H1 (cell line): ENCODE measurements at regions of chr16 and their contacts with region 1.

Region 1: DNA sequence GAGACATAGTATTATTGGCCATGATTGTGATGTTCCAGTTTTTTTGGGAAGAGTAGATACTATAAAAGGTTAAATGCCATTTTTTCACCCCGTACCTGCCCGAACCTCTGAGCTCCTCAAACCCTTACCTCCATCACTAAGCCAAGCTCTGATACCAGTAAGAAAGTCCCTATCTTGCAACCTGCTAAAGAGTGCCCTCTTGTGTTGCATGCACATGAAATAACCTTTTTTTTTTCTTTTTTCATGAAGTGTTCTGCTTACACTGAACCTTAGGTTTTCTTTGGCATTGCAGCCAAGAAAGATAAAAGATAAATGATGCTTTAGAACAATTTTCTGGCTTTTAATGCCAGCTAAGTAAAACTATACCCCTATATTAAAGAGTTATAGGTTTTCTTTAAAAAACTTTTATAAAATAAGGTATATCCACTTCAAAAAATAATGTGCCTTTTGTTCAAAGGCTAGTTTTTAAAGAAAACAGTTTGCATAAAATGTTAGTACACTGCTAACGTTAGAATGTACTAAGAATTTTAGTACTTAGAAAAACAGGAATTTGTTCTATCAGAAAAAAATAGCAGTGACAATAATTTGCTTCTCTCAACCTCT is 295.3 kb upstream of the PMFBP1 start:
- DNase-seq: no peak
- H3K4me3 ChIP-seq: no peak overlapping the region
- H3K27ac ChIP-seq: no peak overlapping the region
- H3K4me1 ChIP-seq: no peaks in the 10 kb centered on the region
- H3K27me3 ChIP-seq: no peaks in the 10 kb centered on the region
- CTCF ChIP-seq: peak in 2 of 3 experiments; percentile 74; a peak in 3 of 4 replicates
- EP300 ChIP-seq: no peak
- POLR2A ChIP-seq: no peak
- RAD21 ChIP-seq: peak; percentile 85

Region 2: GRCh38 chr16:72124761-72125634 is 342.3 kb before region 1 on chr16:
- CTCF ChIA-PET with region 1: interaction called, 11 read pairs
- POLR2A ChIA-PET with region 1: no interaction called
- DNase-seq: peak; percentile 53 to 84
- H3K4me3 ChIP-seq: no peak overlapping the region
- H3K27ac ChIP-seq: no peak overlapping the region
- H3K4me1 ChIP-seq: peaks cover 0 to 4% (median 0%) of the 10 kb centered on the region in 4 experiments; a peak in 3 of 7 replicates
- H3K27me3 ChIP-seq: no peaks in the 10 kb centered on the region
- CTCF ChIP-seq: peak; percentile 79 to 91 (median 82)
- EP300 ChIP-seq: no peak
- POLR2A ChIP-seq: no peak
- RAD21 ChIP-seq: peak; percentile 92

Region 3: GRCh38 chr16:72195609-72196008 is 271.6 kb before region 1 on chr16:
- CTCF ChIA-PET with region 1: interaction called, 11 read pairs
- POLR2A ChIA-PET with region 1: no interaction called
- DNase-seq: peak; percentile 7 to 59
- H3K4me3 ChIP-seq: no peak overlapping the region
- H3K27ac ChIP-seq: no peak overlapping the region
- H3K4me1 ChIP-seq: peaks cover 2 to 4% (median 2%) of the 10 kb centered on the region in 4 experiments; a peak in 4 of 7 replicates
- H3K27me3 ChIP-seq: no peaks in the 10 kb centered on the region
- CTCF ChIP-seq: peak; percentile 80
- EP300 ChIP-seq: no peak
- POLR2A ChIP-seq: no peak
- RAD21 ChIP-seq: peak; percentile 93 to 96

Region 4: DNA sequence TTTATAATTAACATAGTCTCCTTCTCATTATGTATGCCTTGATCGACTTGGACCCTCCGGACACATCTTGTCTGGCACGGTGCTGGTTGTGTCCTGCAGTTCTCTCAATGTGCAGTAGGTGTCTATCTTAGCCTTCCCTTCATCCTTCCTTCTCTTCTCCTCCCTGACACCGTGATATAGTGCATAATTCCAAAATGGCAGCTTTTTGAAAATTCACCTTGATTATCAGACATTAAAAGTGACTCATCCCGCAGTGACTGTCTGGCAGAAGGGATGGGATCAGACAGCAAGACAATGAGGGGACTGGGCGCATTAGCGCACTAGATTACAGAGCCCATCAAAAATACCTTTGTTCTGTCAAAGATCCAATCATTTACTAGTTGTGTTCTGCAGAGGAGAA is 225.3 kb before region 1 on chr16:
- CTCF ChIA-PET with region 1: interaction called, 18 read pairs
- POLR2A ChIA-PET with region 1: no interaction called
- DNase-seq: no peak
- H3K4me3 ChIP-seq: no peak overlapping the region
- H3K27ac ChIP-seq: no peak overlapping the region
- H3K4me1 ChIP-seq: no peaks in the 10 kb centered on the region
- H3K27me3 ChIP-seq: no peaks in the 10 kb centered on the region
- CTCF ChIP-seq: peak; percentile 69 to 84 (median 71)
- EP300 ChIP-seq: no peak
- POLR2A ChIP-seq: no peak
- RAD21 ChIP-seq: peak; percentile 90 to 91

Region 5: GRCh38 chr16:72400257-72400882 is 66.9 kb before region 1 on chr16:
- CTCF ChIA-PET with region 1: interaction called, 12 read pairs
- POLR2A ChIA-PET with region 1: no interaction called
- DNase-seq: peak in 1 of 2 experiments; percentile 74
- H3K4me3 ChIP-seq: no peak overlapping the region
- H3K27ac ChIP-seq: no peak overlapping the region
- H3K4me1 ChIP-seq: peaks cover 0 to 2% (median 0%) of the 10 kb centered on the region in 4 experiments; a peak in 1 of 7 replicates
- H3K27me3 ChIP-seq: no peaks in the 10 kb centered on the region
- CTCF ChIP-seq: peak in 2 of 3 experiments; percentile 63 to 67; a peak in 3 of 4 replicates
- EP300 ChIP-seq: no peak
- POLR2A ChIP-seq: no peak
- RAD21 ChIP-seq: peak; percentile 63 to 77

Region 6: DNA sequence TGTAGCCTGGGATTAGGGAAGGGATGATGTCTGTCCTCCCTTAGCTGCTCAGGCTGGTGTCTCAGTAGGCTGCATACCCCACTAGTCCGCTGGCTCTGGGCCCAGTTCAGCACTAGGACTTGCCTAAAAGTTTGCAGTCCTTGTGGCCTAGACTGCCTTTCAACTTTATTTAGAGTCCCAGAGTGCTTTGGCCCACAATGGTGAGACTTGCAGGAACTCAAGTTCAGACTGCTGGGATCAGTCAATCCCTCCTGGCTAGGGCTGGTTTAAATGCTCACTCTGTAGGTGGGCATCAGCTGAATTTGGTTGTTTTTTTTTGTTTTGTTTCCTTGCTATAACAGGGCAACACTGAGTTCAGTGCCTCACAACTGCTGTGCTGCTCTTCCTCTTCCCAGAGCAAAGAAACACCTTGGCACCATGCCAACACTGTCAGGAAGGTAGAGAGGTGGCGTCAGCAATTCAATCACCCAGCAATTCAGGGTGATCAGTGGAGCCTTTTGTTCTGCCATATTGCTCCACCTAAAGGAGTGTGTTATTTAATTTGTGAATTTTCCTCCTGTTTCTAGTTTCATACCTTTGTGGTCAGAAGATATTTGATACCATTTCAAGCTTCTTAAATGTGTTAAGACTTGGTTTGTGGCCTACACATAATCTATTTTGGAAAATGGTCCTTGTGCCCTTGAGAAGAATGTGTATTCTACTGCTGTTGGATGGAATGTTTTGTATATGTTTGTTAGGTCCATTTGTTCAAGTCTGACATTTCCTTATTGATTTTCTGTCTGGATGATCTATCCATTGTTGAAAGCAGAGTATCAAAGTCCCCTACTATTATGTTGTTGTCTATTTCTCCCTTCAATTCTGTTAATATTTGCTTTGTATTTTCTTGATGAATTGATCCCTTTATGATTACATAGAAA is 11.3 kb before region 1 on chr16:
- CTCF ChIA-PET with region 1: interaction called, 19 read pairs
- POLR2A ChIA-PET with region 1: no interaction called
- DNase-seq: no peak
- H3K4me3 ChIP-seq: no peak overlapping the region
- H3K27ac ChIP-seq: no peak overlapping the region
- H3K4me1 ChIP-seq: no peaks in the 10 kb centered on the region
- H3K27me3 ChIP-seq: no peaks in the 10 kb centered on the region
- CTCF ChIP-seq: no peak
- EP300 ChIP-seq: no peak
- POLR2A ChIP-seq: no peak
- RAD21 ChIP-seq: no peak

Region 7: DNA sequence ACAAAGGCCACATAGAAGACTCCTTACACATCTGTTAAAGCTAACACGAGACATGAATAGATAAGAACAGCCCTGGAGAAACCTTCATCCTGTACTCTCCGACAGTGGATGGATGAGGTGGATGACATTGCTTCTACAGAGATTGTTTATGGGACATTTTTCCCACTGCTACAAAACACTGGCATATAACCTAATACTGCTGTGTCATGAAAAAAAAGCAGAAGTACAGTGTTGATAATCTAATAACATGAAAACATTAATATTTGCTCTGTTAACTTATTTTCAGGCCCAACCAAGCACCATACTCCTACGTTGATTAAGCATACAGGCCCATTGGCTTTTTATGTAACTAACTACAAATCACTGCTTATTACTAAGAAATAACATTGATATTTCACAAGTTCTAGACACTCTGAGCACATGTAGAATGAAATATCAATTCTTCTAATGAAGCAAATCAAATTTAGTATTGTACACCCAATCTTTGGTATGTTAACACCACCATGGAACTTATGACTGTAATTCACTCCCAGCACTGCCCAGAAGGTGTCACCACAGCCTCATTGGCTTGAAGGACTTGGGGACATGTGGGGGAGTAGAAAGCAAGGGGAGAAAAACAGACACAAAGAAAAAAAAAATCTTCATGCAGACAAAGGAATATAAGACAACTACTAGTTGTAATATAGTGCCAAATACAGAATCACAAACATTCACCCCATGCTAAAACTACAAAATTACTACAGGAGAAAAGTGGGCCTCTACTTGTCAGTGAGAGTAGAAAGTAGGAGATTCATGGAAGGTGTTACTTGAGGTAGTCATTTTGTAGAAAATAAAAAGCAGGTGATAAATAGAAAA is 34.7 kb after region 1 on chr16:
- CTCF ChIA-PET with region 1: no interaction called
- POLR2A ChIA-PET with region 1: no interaction called
- DNase-seq: peak in 1 of 2 experiments; percentile 68
- H3K4me3 ChIP-seq: no peak overlapping the region
- H3K27ac ChIP-seq: no peak overlapping the region
- H3K4me1 ChIP-seq: no peaks in the 10 kb centered on the region
- H3K27me3 ChIP-seq: no peaks in the 10 kb centered on the region
- CTCF ChIP-seq: peak; percentile 60 to 84 (median 83)
- EP300 ChIP-seq: no peak
- POLR2A ChIP-seq: no peak
- RAD21 ChIP-seq: peak; percentile 96 to 97